ENCODE measurements at regions of chr14 and their contacts with region 1.

Region 1: GRCh38 chr14:57884175-57884574 is 18.3 kb upstream of the SLC35F4 start:
- DNase-seq: no peak
- ATAC-seq: no peak
- H3K4me3 ChIP-seq: no peak overlapping the region
- H3K27ac ChIP-seq: no peak overlapping the region
- H3K4me1 ChIP-seq: no peaks in the 10 kb centered on the region
- H3K27me3 ChIP-seq: peaks cover 69% of the 10 kb centered on the region
- CTCF ChIP-seq: peak; percentile 26 to 41 (median 31); a peak in 2 of 6 replicates
- POLR2A ChIP-seq: no peak
- RAD21 ChIP-seq: peak; percentile 46

Region 2: GRCh38 chr14:57486767-57487379 is 397.3 kb before region 1 on chr14:
- CTCF ChIA-PET with region 1: no interaction called
- POLR2A ChIA-PET with region 1: no interaction called
- RAD21 ChIA-PET with region 1: no interaction called
- intact Hi-C with region 1: loop called (anchors 5 kb)
- DNase-seq: peak; percentile 18
- ATAC-seq: peak; percentile 72
- H3K4me3 ChIP-seq: no peak overlapping the region
- H3K27ac ChIP-seq: no peak overlapping the region
- H3K4me1 ChIP-seq: no peaks in the 10 kb centered on the region
- H3K27me3 ChIP-seq: peaks cover 72% of the 10 kb centered on the region
- CTCF ChIP-seq: peak; percentile 47 to 69 (median 64); a peak in 5 of 6 replicates
- POLR2A ChIP-seq: no peak
- RAD21 ChIP-seq: peak; percentile 61